Aorta (tissue), 5 donors: ENCODE measurements at regions of chr5 and their contacts with region 1.

Region 1: DNA sequence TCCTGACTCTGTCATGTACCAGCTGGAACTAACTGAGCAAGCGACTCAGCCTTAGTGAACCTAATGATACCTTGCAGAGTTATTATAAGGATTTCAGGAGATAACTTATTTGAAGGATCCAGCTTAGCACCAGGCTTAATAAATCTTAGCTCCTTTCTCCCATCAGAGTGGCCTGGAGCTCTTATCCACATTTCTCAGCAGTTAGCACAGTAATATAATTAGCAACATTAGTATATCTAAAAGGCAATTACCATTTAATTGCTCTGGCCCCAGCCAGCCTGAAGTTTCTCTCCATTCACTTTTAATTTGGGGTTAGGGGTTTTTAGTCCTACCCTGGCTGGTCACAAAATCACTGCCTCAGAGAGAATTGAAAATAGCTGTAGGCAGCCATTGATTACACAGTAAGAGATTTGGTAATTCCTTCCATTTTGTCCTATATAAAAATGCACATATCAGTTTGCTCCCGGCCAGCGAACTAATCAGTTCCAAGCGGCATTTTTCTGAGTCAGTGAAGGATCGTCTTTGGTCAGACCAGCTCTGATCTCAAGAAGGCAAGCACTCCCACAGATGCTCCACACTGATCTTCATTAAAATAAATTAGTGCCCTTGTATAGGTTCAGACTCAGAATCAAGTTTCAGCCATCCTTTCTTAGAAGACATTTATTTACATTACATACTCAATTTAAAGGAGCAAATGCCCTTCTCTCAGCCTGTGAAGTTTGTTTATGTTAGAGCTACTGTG is 56.6 kb downstream of the SNCAIP start:
- DNase-seq: no peak
- ATAC-seq: no peak
- H3K4me3 ChIP-seq: no peak overlapping the region
- H3K27ac ChIP-seq: no peak overlapping the region
- H3K4me1 ChIP-seq: peaks cover 0 to 3% of the 10 kb centered on the region in 2 donors
- H3K27me3 ChIP-seq: no peaks in the 10 kb centered on the region

Region 2: DNA sequence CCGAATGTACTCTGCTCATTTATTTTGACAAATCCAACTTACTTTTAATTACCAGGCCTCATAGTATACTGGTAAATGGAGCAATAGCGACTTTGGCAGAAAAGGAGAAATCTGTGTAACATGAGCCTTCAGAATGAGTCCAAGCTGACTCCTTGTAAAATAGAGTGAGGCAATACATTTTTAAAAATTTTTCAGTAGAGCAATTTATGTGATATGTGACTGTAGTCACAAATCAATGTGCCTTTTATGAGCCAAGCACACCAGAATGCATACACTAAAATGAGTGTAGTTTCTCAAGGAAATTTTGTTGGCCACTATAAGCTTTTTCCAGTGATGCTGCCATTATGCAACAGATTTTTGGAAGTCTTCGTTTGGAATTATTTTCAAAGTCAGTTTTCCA is 17.1 kb after region 1 on chr5:
- intact Hi-C with region 1: loop called in 1 of 2 experiments (anchors 2 kb)
- DNase-seq: no peak
- ATAC-seq: peak; percentile 88
- H3K4me3 ChIP-seq: no peak overlapping the region
- H3K27ac ChIP-seq: no peak overlapping the region
- H3K4me1 ChIP-seq: peaks cover 0 to 3% of the 10 kb centered on the region in 2 donors
- H3K27me3 ChIP-seq: no peaks in the 10 kb centered on the region